ENCODE measurements at regions of chr3 and their contacts with region 1.

Region 1: GRCh38 chr3:99833617-99834205 is 16.0 kb downstream of the CMSS1 start:
- DNase-seq: no peak
- H3K4me3 ChIP-seq: no peak overlapping the region
- H3K27ac ChIP-seq: peak overlapping the region in 1 of 8 donors; percentile 14
- H3K4me1 ChIP-seq: peaks cover 0 to 34% (median 4%) of the 10 kb centered on the region in 6 donors
- H3K27me3 ChIP-seq: no peaks in the 10 kb centered on the region
- CTCF ChIP-seq: no peak
- POLR2A ChIP-seq: no peak

Region 2: DNA sequence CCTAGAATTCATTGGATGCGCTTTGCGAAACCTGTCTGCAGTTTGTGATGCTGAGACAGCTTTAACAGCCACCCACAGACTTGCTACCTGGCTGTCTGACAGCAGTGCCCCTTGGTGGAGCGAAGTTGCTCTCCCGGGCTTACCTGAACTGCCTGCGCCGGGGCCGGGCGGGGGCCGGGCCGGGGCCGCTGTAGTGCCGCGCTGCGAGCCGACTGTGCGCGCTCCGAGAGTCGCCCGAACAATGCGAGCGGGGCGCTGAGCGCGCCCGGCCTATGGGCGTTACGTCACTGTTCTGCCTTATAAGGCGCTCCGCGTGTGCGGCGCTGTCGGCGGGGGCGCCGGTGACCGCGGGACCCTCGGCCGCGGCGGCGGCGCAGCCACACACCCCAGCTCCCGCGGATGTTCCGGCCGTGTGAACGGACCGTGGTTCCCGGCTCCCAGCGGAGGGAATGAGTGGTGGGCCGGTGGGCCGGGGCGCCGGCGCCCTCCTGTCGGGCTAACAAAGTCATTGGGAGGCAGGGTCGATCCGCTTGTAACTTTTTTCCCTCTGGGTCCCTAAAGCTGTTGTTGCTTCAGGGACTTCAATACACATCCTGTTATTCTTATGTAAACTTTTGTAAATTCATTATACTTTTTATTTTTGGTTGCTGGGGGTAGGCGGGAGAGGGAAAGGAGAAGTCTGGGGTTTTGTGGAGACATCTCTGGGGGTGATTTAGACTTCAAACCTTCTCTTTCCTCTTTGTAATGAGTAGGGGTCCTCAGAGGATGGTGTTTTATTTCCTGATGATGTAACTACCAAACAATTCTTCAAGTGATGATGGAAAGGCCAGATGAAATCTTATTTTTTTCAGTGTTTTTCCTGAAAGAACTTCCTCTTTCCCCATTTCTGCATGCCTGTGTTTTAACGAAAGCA is 42.5 kb after region 1 on chr3:
- intact Hi-C with region 1: no loop called
- DNase-seq: peak; percentile 94
- H3K4me3 ChIP-seq: peak overlapping the region; percentile 34 to 73 (median 51)
- H3K27ac ChIP-seq: peak overlapping the region; percentile 61 to 88 (median 85)
- H3K4me1 ChIP-seq: peaks cover 0 to 41% (median 20%) of the 10 kb centered on the region in 6 donors
- H3K27me3 ChIP-seq: peaks cover 0 to 13% (median 0%) of the 10 kb centered on the region in 7 donors
- CTCF ChIP-seq: peak in 3 of 11 experiments; percentile 16 to 21 (median 17)
- POLR2A ChIP-seq: peak in 1 of 3 donors; percentile 49

Region 3: DNA sequence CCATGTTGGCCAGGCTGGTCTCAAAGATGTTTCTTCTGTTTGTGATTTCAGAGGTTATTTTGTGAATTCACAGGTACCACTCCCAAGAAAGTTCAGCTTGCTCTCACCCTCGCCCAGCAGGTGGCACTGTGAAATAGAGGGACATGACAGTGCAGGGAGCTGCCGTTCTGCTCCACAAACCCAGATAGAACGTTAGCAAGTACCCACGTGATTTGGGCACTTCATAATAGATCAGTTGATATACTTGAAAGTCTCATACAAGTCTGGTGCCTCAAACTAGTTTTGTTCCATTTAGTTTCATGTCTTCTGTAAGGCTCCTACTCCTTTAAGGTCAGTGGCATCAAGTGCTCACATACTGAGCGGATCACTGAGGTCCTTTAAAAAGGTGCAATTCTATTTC is 235.1 kb after region 1 on chr3:
- intact Hi-C with region 1: loop called (anchors 10 kb)
- DNase-seq: peak; percentile 93
- H3K4me3 ChIP-seq: no peak overlapping the region
- H3K27ac ChIP-seq: peak overlapping the region in 6 of 8 donors; percentile 26 to 63 (median 46)
- H3K4me1 ChIP-seq: peaks cover 12 to 56% (median 35%) of the 10 kb centered on the region in 6 donors
- H3K27me3 ChIP-seq: no peaks in the 10 kb centered on the region
- CTCF ChIP-seq: peak; percentile 55 to 86 (median 80)
- POLR2A ChIP-seq: no peak

Region 4: DNA sequence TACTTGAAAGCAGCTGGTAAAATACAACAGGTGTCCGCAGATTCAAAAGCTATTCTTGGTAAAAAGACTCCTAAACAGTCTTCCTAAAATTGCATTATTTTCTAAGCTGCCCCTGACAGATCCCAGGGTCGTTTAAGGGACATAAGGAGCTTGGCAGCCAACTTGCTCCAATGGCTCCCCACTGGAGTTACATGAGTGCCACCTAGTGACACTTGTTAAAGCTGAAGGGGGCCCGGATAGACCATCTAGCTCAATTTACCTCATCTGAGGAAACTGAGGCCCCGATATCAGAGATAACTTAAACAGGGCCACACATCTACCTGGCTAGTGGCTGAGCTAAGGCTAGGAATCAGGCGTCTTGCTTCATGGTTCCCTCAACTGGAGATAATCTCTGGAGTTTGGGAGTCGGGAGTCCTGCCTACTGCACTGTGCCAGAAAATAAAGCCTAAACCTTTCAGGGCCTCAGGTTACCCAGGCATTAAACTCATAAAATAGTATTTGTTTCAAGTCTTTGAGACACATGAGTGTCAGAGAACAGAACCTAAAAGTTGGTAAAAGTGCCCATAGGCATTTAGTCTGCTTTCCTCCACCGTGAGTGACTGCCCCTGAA is 420.6 kb after region 1 on chr3:
- intact Hi-C with region 1: loop called (anchors 5 kb)
- DNase-seq: no peak
- H3K4me3 ChIP-seq: no peak overlapping the region
- H3K27ac ChIP-seq: peak overlapping the region in 2 of 8 donors; percentile 18 to 35
- H3K4me1 ChIP-seq: peaks cover 3 to 20% (median 7%) of the 10 kb centered on the region in 6 donors
- H3K27me3 ChIP-seq: no peaks in the 10 kb centered on the region
- CTCF ChIP-seq: peak in 10 of 11 experiments; percentile 29 to 79 (median 69)
- POLR2A ChIP-seq: no peak

Region 5: DNA sequence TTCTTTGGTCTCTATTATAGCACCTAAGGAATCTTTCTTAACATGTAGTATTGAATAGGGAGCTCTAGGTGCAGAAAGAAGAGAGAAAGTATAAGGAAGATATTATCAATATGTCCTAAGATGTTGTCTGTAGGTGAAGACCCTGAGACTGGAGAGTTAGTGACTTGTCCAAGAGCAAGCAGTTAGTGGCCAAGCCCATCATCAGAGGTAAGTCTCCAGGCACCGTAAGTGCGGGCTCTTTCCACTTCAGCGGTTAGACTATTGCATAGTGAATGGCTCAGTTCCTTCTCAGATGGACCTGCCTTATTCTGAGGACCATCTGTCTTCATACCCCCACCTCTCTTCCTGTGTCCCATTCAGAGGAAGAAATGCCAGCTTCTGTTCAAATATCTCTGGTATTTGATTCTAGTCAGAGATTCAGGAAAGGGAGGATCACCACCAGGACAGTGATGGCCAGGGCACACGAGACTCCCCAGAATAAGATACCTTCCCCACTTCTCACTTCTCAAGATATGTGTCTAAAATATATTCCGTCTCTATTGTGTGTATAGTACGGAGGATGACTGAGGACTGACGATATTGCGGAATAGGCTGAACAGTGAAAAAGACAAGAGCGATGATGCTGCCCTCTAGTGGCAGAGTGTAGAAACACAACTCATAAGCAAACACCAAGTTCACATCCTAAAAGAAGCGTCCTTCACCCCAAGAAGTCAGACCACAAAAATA is 756.6 kb after region 1 on chr3:
- intact Hi-C with region 1: loop called (anchors 10 kb)
- DNase-seq: no peak
- H3K4me3 ChIP-seq: peak overlapping the region in 1 of 8 donors; percentile 31
- H3K27ac ChIP-seq: no peak overlapping the region
- H3K4me1 ChIP-seq: peaks cover 0 to 8% (median 2%) of the 10 kb centered on the region in 6 donors
- H3K27me3 ChIP-seq: no peaks in the 10 kb centered on the region
- CTCF ChIP-seq: peak; percentile 54 to 90 (median 84)
- POLR2A ChIP-seq: no peak

Measured in spleen (tissue), 13 donors.